ENCODE measurements at regions of chr5 and their contacts with region 1.

Region 1: GRCh38 chr5:146965761-146966659 is 87.5 kb upstream of the PPP2R2B start:
- DNase-seq: peak; percentile 25 to 30
- ATAC-seq: peak; percentile 82

Region 2: GRCh38 chr5:146541958-146542849 is 423.8 kb before region 1 on chr5:
- intact Hi-C with region 1: loop called (anchors 5 to 10 kb)
- DNase-seq: peak; percentile 46 to 74
- ATAC-seq: peak; percentile 96

Region 3: DNA sequence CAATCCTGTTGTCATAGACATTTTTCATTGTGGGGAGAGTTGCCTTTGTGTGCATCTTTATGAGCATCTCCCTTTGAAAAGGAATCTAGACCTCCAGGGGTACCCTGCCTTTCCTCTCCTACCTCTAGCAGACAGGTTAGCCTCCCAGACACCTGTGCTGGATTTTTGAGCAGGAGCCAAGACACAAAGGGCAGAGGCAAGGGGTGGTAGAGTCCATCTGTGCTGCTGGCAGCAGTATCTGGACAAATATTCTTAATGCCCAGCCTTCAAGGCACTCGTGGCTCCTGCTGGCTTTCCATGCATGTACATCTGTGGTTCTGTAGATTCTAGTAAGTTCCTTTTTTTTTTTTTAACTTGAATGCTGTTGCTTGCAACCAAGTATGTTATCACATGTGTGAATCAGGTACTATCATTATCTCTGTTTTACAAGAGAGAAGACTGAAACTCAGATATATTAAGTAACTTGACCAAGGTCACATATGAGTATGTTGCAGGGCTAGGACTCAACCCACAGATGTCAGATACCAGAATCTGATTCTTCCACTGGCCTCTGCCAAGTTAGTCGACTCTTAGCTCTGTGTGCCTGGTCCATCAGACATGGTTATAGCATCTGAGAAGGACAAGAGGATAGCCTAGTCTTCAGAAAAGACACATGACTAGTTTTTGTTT is 417.1 kb before region 1 on chr5:
- intact Hi-C with region 1: loop called (anchors 5 to 10 kb)
- DNase-seq: no peak
- ATAC-seq: no peak

Region 4: GRCh38 chr5:146662229-146662628 is 303.8 kb before region 1 on chr5:
- intact Hi-C with region 1: loop called in 1 of 2 experiments (anchors 10 kb)
- DNase-seq: no peak
- ATAC-seq: no peak

Region 5: GRCh38 chr5:147190331-147190730 is 224.3 kb after region 1 on chr5:
- intact Hi-C with region 1: no loop called
- DNase-seq: no peak
- ATAC-seq: no peak

Measured in left colon (tissue), 2 donors.